B cell (primary cell): ENCODE measurements at regions of chr16 and their contacts with region 1.

Region 1: DNA sequence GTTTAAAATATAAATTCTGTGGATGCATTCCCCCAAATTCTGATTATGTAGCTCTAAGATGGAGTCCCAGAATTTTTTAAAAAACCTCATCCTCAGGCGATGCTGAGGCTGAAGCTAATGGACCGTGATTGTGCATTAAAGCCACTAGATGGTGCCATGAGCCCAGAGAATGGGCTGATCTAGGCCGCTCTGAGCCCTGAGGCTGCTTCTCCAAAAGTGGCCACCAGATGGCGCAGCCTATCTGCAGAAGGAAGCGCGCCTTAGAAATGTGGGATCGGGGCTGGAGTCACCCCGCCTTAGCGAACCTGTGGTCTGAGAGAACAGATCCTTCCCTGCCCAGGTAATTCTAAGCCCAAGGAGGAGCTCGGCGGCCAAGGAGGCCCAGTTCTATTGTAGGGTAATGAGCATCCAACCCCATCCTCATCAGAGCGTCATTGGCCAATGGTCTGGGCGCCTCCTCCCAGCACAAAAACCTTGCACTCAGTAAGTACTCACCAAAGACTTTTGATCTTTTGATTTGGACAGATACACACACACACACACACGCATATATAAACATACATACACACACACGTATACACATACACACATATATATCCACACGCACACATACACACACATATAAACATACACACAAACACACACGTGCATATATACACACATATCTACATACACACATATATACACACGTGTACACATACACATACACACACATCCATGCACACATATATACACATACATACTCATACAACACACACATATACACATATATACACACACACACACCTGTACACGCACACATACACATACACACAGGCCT is 13.7 kb upstream of the MMP2 start:
- DNase-seq: peak; percentile 84
- ATAC-seq: peak; percentile 93
- H3K4me3 ChIP-seq: no peak overlapping the region
- H3K4me3 Mint-ChIP-seq: no peak overlapping the region
- H3K27ac ChIP-seq: no peak overlapping the region
- H3K27ac Mint-ChIP-seq: no peak overlapping the region
- H3K4me1 ChIP-seq: no peaks in the 10 kb centered on the region
- H3K4me1 Mint-ChIP-seq: no peaks in the 10 kb centered on the region
- H3K27me3 ChIP-seq: no peaks in the 10 kb centered on the region
- H3K27me3 Mint-ChIP-seq: peaks cover 9% of the 10 kb centered on the region
- CTCF ChIP-seq: peak; percentile 100

Region 2: DNA sequence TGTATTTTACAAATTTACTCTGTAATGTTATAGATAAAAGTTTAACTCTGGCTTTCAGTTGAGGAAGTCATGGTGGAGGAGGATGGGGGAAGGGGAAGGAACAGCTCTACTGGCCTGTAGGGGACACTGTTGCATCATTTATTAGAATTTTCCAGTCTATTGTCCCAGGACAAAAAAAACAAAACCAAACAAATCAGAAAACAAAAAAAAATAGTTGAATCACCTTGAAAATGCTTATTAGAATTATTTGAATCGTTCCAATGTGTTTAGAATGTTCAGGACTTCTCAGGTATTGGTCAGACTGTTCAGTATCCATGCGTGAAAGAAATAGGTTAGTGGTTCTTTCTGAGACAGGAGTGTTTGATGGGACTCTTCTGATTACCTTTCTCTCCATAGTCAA is 1519.3 kb before region 1 on chr16:
- CTCF ChIA-PET with region 1: no interaction called
- POLR2A ChIA-PET with region 1: no interaction called
- intact Hi-C with region 1: loop called (anchors 10 kb)
- DNase-seq: peak; percentile 32
- ATAC-seq: no peak
- H3K4me3 ChIP-seq: no peak overlapping the region
- H3K4me3 Mint-ChIP-seq: no peak overlapping the region
- H3K27ac ChIP-seq: no peak overlapping the region
- H3K27ac Mint-ChIP-seq: no peak overlapping the region
- H3K4me1 ChIP-seq: peaks cover 5 to 8% of the 10 kb centered on the region in 2 donors
- H3K4me1 Mint-ChIP-seq: peaks cover 26% of the 10 kb centered on the region
- H3K27me3 ChIP-seq: no peaks in the 10 kb centered on the region
- H3K27me3 Mint-ChIP-seq: no peaks in the 10 kb centered on the region
- CTCF ChIP-seq: peak; percentile 70

Region 3: DNA sequence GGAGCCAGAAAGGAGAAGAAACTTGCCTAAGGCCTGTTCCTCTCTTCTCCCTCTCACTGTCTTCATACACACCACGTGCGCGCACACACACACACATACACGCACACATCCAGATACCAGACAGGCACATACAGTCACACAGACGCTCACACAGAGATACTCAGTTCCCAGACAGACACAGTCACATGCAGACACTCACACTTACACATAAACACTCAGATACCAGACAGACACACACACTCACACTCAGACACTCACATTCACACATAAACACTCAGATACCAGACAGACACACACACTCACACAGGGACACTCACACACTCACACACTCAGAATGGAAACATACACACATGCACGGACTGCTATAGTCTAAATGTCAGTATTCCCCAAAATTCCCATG is 10.4 kb before region 1 on chr16:
- CTCF ChIA-PET with region 1: interaction called, 14 read pairs
- POLR2A ChIA-PET with region 1: no interaction called
- intact Hi-C with region 1: no loop called
- DNase-seq: no peak
- ATAC-seq: no peak
- H3K4me3 ChIP-seq: no peak overlapping the region
- H3K4me3 Mint-ChIP-seq: no peak overlapping the region
- H3K27ac ChIP-seq: no peak overlapping the region
- H3K27ac Mint-ChIP-seq: no peak overlapping the region
- H3K4me1 ChIP-seq: no peaks in the 10 kb centered on the region
- H3K4me1 Mint-ChIP-seq: no peaks in the 10 kb centered on the region
- H3K27me3 ChIP-seq: no peaks in the 10 kb centered on the region
- H3K27me3 Mint-ChIP-seq: peaks cover 10% of the 10 kb centered on the region
- CTCF ChIP-seq: no peak

Region 4: GRCh38 chr16:55687802-55688201 is 222.5 kb after region 1 on chr16:
- CTCF ChIA-PET with region 1: no interaction called
- POLR2A ChIA-PET with region 1: no interaction called
- intact Hi-C with region 1: no loop called
- DNase-seq: no peak
- ATAC-seq: no peak
- H3K4me3 ChIP-seq: no peak overlapping the region
- H3K4me3 Mint-ChIP-seq: no peak overlapping the region
- H3K27ac ChIP-seq: no peak overlapping the region
- H3K27ac Mint-ChIP-seq: no peak overlapping the region
- H3K4me1 ChIP-seq: no peaks in the 10 kb centered on the region
- H3K4me1 Mint-ChIP-seq: no peaks in the 10 kb centered on the region
- H3K27me3 ChIP-seq: no peaks in the 10 kb centered on the region
- H3K27me3 Mint-ChIP-seq: peaks cover 9% of the 10 kb centered on the region
- CTCF ChIP-seq: no peak

Region 5: DNA sequence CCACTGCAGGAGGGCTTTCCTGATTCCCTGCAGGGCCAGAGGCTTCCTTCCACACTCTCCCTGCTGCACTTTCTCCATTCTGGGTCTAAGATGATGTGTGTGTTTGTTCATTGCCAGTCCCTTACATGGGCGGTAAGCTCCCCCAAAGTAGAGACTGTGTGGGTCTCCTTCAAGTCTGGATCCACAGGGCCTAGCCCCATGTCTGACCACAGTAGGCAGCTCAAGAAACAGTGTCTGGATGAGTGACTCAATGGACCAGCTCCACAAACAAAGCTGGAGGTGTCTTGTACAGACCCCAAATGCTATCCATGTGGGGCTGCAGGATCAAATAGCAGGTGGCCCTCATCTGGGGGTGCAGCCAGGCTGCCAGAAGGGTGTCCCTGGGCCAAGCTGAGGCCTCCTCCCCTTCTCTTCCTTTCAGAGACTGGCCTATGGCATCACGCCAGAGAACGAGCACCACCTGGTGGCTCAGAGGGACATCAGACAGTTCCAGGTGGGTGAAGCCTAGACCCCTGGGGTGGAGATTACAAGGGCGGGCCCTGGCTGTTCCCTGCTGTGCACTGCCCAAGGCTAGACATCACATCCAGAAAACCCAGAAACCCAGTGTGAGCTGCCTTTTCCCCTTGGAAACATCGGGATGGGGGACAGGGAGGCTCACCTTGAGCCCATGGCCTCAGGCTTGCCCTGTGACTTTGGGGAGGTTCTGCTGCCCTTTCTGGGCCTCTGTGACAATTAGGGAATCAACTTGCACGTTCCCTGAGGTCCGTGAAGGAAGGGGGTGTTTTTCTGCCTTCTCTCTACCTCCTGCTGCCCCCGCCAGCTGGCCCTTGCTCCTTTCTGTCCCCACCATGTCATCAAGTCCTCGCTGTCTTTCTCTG is 236.4 kb after region 1 on chr16:
- CTCF ChIA-PET with region 1: interaction called, 14 read pairs
- POLR2A ChIA-PET with region 1: no interaction called
- intact Hi-C with region 1: no loop called
- DNase-seq: peak; percentile 28
- ATAC-seq: no peak
- H3K4me3 ChIP-seq: no peak overlapping the region
- H3K4me3 Mint-ChIP-seq: no peak overlapping the region
- H3K27ac ChIP-seq: no peak overlapping the region
- H3K27ac Mint-ChIP-seq: no peak overlapping the region
- H3K4me1 ChIP-seq: no peaks in the 10 kb centered on the region
- H3K4me1 Mint-ChIP-seq: no peaks in the 10 kb centered on the region
- H3K27me3 ChIP-seq: no peaks in the 10 kb centered on the region
- H3K27me3 Mint-ChIP-seq: peaks cover 9% of the 10 kb centered on the region
- CTCF ChIP-seq: no peak

Region 6: DNA sequence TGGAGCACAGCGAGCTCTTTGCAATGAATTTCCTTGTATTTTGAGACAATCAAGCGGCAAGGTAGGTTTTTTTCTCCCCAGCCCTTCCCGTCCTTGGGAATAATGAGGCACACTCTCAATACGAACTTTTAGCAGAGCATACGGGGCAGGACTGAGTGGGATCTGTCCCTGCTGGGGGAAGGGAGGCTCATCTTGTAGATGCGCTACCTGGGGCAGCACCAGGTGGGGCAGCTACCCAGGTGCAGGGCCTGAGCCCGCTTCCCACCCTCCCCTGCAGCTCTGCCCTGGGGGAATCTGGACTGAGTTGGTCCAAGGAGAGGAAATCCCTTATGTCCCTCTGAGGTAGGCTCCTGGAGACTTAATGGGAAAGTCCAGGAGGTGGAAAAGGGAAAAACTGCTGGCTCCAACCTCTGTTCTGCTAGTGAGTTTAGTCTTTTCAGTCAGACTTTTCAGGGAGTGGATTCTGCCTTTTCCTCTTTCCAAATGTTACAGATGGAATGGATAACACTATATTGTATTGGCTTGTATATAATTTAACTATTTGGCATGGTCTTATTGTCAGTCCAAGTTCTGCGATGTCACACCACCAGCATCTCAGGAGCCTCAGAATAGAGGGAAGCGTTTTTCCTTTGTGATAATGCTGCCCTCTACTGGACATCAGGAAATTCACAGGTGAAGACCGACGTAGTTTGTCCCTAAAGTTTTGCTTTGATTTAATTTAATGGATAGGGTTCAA is 377.2 kb after region 1 on chr16:
- CTCF ChIA-PET with region 1: interaction called, 7 read pairs
- POLR2A ChIA-PET with region 1: no interaction called
- intact Hi-C with region 1: loop called (anchors 5 kb)
- DNase-seq: peak; percentile 36
- ATAC-seq: no peak
- H3K4me3 ChIP-seq: no peak overlapping the region
- H3K4me3 Mint-ChIP-seq: no peak overlapping the region
- H3K27ac ChIP-seq: no peak overlapping the region
- H3K27ac Mint-ChIP-seq: no peak overlapping the region
- H3K4me1 ChIP-seq: no peaks in the 10 kb centered on the region
- H3K4me1 Mint-ChIP-seq: no peaks in the 10 kb centered on the region
- H3K27me3 ChIP-seq: no peaks in the 10 kb centered on the region
- H3K27me3 Mint-ChIP-seq: peaks cover 12% of the 10 kb centered on the region
- CTCF ChIP-seq: peak; percentile 78

Region 7: DNA sequence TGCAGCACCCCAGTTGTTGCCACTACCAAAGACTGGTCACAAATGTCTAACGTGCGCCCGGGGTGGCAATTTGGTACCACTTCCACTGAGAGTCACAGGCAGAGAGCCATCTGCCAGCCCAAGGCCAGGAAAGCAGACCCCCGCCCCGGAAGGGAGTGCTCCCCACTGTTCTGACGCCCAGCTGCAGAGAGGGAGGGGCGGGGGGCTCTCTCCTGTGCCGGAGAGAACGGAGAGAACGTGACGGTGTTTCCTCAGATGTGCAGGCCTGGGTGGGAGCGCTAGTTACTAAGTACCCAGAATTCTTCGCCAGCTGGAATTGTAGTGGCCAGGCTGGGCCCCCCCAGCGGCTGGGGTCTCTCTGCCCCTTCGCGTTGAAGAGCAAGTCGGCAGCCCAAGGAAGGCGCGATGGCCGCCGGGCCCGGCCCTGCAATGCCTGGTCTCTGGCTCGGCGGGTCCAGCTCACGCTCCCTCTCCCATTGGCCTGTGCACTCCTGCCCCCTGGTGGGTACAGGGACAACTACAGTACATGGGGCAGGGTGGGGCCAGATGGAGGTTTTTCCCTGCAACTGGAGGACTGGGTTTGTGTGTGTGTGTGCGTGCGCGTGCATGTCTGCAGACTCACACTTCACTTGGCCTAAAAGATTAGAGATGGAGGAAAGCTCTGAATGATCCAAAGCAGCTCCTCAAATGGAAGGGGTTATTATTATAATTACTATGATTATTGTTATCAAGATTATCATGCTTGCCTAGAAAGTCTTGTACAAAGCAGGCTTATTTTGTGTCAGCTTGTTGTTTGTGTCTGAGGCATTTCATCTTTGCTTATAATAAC is 852.9 kb after region 1 on chr16:
- CTCF ChIA-PET with region 1: interaction called, 28 read pairs
- POLR2A ChIA-PET with region 1: no interaction called
- intact Hi-C with region 1: no loop called
- DNase-seq: peak; percentile 75
- ATAC-seq: peak; percentile 98
- H3K4me3 ChIP-seq: peak overlapping the region in 2 of 5 experiments; percentile 12 to 15
- H3K4me3 Mint-ChIP-seq: peak overlapping the region; percentile 39
- H3K27ac ChIP-seq: no peak overlapping the region
- H3K27ac Mint-ChIP-seq: no peak overlapping the region
- H3K4me1 ChIP-seq: peaks cover 3 to 11% of the 10 kb centered on the region in 2 donors
- H3K4me1 Mint-ChIP-seq: peaks cover 13% of the 10 kb centered on the region
- H3K27me3 ChIP-seq: peaks cover 0 to 5% (median 0%) of the 10 kb centered on the region in 4 experiments
- H3K27me3 Mint-ChIP-seq: peaks cover 9% of the 10 kb centered on the region
- CTCF ChIP-seq: peak; percentile 98

Region 8: GRCh38 chr16:56356276-56357240 is 891.3 kb after region 1 on chr16:
- CTCF ChIA-PET with region 1: interaction called, 11 read pairs
- POLR2A ChIA-PET with region 1: no interaction called
- intact Hi-C with region 1: no loop called
- DNase-seq: peak; percentile 67
- ATAC-seq: peak; percentile 81
- H3K4me3 ChIP-seq: peak overlapping the region; percentile 32 to 75 (median 50)
- H3K4me3 Mint-ChIP-seq: peak overlapping the region; percentile 93
- H3K27ac ChIP-seq: peak overlapping the region in 1 of 2 donors; percentile 69
- H3K27ac Mint-ChIP-seq: peak overlapping the region; percentile 46
- H3K4me1 ChIP-seq: peaks cover 4 to 14% of the 10 kb centered on the region in 2 donors
- H3K4me1 Mint-ChIP-seq: peaks cover 21% of the 10 kb centered on the region
- H3K27me3 ChIP-seq: no peaks in the 10 kb centered on the region
- H3K27me3 Mint-ChIP-seq: peaks cover 3% of the 10 kb centered on the region
- CTCF ChIP-seq: peak; percentile 86